Colonic mucosa (tissue), 4 donors: ENCODE measurements at regions of chr20 and their contacts with region 1.

Region 1: GRCh38 chr20:431012-431904 is 23.2 kb downstream of the RBCK1 start:
- DNase-seq: peak; percentile 41
- H3K4me3 ChIP-seq: no peak overlapping the region
- H3K27ac ChIP-seq: no peak overlapping the region
- H3K4me1 ChIP-seq: no peaks in the 10 kb centered on the region
- H3K27me3 ChIP-seq: no peaks in the 10 kb centered on the region
- CTCF ChIP-seq: peak; percentile 33

Region 2: DNA sequence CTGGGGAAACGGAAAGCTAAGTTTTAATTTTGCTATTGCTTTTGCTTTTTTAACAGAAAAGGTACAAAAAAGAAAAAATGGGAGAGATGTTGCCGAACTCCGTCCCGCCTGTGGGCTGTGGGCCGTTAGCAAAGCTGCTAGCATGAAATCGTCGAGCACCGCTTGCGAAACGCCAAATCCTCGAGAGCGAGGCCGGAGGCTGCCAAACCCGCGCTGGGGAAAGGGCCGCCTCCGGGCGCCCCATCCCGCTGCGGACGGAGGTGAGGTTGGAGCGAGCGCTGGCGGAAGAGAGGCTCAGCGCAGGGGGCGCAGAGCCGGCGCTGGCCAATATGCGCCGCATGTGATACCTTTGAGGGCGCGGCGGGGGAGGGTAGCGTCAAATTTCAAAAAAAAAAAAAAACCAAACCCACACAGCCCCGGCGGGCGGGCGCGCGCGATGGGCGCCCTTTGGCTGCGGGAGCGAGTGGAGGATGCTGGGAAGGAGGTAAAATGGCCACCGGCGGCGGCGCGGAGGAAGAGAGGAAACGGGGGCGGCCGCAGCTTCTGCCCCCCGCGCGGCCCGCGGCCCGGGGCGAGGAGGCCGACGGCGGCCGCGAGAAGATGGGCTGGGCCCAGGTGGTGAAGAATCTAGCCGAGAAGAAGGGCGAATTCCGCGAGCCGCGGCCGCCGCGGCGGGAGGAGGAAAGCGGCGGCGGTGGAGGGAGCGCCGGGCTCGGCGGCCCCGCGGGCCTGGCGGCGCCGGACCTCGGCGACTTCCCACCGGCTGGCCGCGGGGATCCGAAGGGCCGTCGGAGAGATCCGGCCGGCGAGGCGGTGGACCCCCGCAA is 133.9 kb before region 1 on chr20 and contains the start of gene ZCCHC3:
- intact Hi-C with region 1: no loop called
- DNase-seq: peak; percentile 85
- H3K4me3 ChIP-seq: peak within 1 kb of the TSS; percentile 76
- H3K27ac ChIP-seq: peak within 1 kb of the TSS; percentile 98
- H3K4me1 ChIP-seq: peaks cover 16% of the 10 kb centered on the region
- H3K27me3 ChIP-seq: no peaks in the 10 kb centered on the region
- CTCF ChIP-seq: no peak
- total RNA-seq, gene ZCCHC3: 13.7 to 15.6 TPM

Region 3: GRCh38 chr20:478949-479429 is 47.7 kb after region 1 on chr20:
- intact Hi-C with region 1: loop called (anchors 5 kb)
- DNase-seq: peak; percentile 43
- H3K4me3 ChIP-seq: no peak overlapping the region
- H3K27ac ChIP-seq: no peak overlapping the region
- H3K4me1 ChIP-seq: peaks cover 4% of the 10 kb centered on the region
- H3K27me3 ChIP-seq: no peaks in the 10 kb centered on the region
- CTCF ChIP-seq: peak; percentile 44